CD4-positive, alpha-beta memory T cell (primary cell): ENCODE measurements at regions of chr2 and their contacts with region 1.

Region 1: DNA sequence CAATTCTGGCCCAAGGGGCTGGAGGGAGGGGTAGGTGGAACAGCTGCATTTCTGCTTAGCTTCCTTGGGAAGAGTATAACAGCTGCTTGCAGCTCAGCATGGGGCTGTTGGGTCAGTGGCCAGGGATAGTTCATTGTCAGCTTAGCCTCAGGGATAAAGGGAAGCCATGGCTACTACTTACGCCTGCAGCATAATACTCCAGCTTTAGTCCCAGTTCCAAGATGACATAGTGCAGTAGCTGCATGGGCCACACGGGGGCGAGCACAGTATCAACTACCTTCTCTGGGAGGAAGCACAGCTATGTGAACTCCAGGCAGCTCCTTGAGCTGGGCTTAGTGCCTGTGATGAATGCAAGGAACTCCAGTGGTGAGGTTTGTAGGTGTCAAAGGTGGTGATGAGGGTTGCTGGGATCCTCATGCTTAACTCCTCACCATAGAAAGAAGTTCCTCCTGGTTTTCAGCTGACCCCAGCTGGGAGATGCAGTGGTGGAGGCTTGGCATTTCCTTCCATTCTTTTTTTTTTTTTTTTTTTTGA is 35.4 kb upstream of the RHOB start:
- DNase-seq: peak; percentile 55 to 63 (median 59)
- H3K4me3 ChIP-seq: no peak overlapping the region
- H3K4me3 Mint-ChIP-seq: no peak overlapping the region
- H3K27ac ChIP-seq: no peak overlapping the region
- H3K27ac Mint-ChIP-seq: peak overlapping the region in 2 of 7 donors; percentile 13 to 71
- H3K4me1 ChIP-seq: no peaks in the 10 kb centered on the region
- H3K4me1 Mint-ChIP-seq: peaks cover 0 to 2% (median under 1%) of the 10 kb centered on the region in 4 donors
- H3K27me3 ChIP-seq: no peaks in the 10 kb centered on the region
- H3K27me3 Mint-ChIP-seq: peaks cover 3 to 12% of the 10 kb centered on the region in 2 donors

Region 2: GRCh38 chr2:19554520-19554919 is 856.9 kb before region 1 on chr2:
- CTCF ChIA-PET with region 1: no interaction called
- POLR2A ChIA-PET with region 1: no interaction called
- intact Hi-C with region 1: no loop called
- DNase-seq: no peak
- H3K4me3 ChIP-seq: no peak overlapping the region
- H3K4me3 Mint-ChIP-seq: no peak overlapping the region
- H3K27ac ChIP-seq: no peak overlapping the region
- H3K27ac Mint-ChIP-seq: no peak overlapping the region
- H3K4me1 ChIP-seq: no peaks in the 10 kb centered on the region
- H3K4me1 Mint-ChIP-seq: peaks cover 0 to 7% (median 2%) of the 10 kb centered on the region in 4 donors
- H3K27me3 ChIP-seq: no peaks in the 10 kb centered on the region
- H3K27me3 Mint-ChIP-seq: peaks cover 4 to 13% of the 10 kb centered on the region in 2 donors

Region 3: GRCh38 chr2:20317197-20317596 is 94.2 kb before region 1 on chr2:
- CTCF ChIA-PET with region 1: no interaction called
- POLR2A ChIA-PET with region 1: no interaction called
- intact Hi-C with region 1: no loop called
- DNase-seq: no peak
- H3K4me3 ChIP-seq: no peak overlapping the region
- H3K4me3 Mint-ChIP-seq: peak overlapping the region in 5 of 8 donors; percentile 34 to 55 (median 48)
- H3K27ac ChIP-seq: no peak overlapping the region
- H3K27ac Mint-ChIP-seq: peak overlapping the region in 6 of 7 donors; percentile 0 to 82 (median 77)
- H3K4me1 ChIP-seq: peaks cover 35% of the 10 kb centered on the region
- H3K4me1 Mint-ChIP-seq: peaks cover 28 to 71% (median 54%) of the 10 kb centered on the region in 4 donors
- H3K27me3 ChIP-seq: no peaks in the 10 kb centered on the region
- H3K27me3 Mint-ChIP-seq: no peaks in the 10 kb centered on the region

Region 4: GRCh38 chr2:20398956-20399567 is 12.4 kb before region 1 on chr2:
- CTCF ChIA-PET with region 1: interaction called, 10 read pairs
- POLR2A ChIA-PET with region 1: no interaction called
- intact Hi-C with region 1: no loop called
- DNase-seq: no peak
- H3K4me3 ChIP-seq: no peak overlapping the region
- H3K4me3 Mint-ChIP-seq: no peak overlapping the region
- H3K27ac ChIP-seq: no peak overlapping the region
- H3K27ac Mint-ChIP-seq: no peak overlapping the region
- H3K4me1 ChIP-seq: no peaks in the 10 kb centered on the region
- H3K4me1 Mint-ChIP-seq: no peaks in the 10 kb centered on the region
- H3K27me3 ChIP-seq: no peaks in the 10 kb centered on the region
- H3K27me3 Mint-ChIP-seq: peaks cover 6 to 15% of the 10 kb centered on the region in 2 donors

Region 5: DNA sequence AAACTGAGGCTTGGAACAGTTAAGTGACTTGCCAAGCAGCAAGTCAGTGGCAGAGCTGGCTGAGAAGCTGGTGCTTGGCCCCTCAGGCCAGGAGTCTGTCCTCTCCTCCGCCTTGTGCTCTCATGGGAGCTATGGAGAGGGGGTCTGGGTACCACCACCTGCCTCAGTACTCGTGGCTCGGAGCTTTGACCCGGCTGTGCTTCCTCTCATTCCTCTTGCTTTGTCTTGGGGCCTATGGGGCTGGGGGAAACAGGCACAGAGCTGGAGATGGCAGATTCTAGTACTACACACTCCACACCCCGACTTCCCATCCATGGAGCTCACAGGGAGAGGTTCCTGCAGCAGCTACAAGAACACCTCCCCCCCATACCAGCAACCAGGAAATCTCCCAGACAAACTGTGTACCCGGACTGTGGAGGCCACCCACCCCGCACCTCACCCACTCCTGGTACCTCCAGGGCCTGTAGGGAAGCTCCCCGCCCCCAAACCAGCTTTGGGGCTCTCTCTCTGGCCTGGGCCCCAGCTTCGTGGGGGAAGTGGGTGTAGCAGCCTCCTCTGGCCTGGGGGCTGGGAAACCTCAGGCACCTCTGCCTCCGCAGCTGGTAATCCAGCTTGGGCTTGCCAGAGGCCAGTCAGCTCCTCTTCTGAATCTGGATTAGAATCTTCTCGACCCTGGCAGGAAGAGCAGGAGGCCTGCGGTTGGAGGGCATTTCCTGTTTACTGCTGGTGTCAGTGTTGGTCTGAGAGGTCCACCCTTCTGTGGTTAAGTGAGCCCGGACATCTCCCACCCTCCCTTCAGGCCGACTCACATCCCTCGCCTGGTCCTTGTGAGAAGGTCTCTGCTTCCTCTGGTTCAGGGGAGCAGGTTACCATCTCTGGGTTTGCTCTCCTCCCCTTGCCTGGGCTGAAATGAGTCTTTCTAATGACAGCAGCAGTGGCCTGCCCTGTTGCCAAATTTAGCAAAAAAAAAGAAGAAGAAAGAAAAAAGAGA is 13.2 kb after region 1 on chr2:
- CTCF ChIA-PET with region 1: interaction called, 93 read pairs
- POLR2A ChIA-PET with region 1: interaction called, 3 read pairs
- intact Hi-C with region 1: no loop called
- DNase-seq: peak in 1 of 5 donors; percentile 9
- H3K4me3 ChIP-seq: no peak overlapping the region
- H3K4me3 Mint-ChIP-seq: peak overlapping the region in 7 of 8 donors; percentile 44 to 70 (median 63)
- H3K27ac ChIP-seq: no peak overlapping the region
- H3K27ac Mint-ChIP-seq: peak overlapping the region in 6 of 7 donors; percentile 82 to 94 (median 86)
- H3K4me1 ChIP-seq: peaks cover 15% of the 10 kb centered on the region
- H3K4me1 Mint-ChIP-seq: peaks cover 11 to 22% (median 17%) of the 10 kb centered on the region in 4 donors
- H3K27me3 ChIP-seq: no peaks in the 10 kb centered on the region
- H3K27me3 Mint-ChIP-seq: peaks cover 4% of the 10 kb centered on the region in 2 donors

Region 6: GRCh38 chr2:20438334-20439192 is 27.1 kb after region 1 on chr2:
- CTCF ChIA-PET with region 1: interaction called, 11 read pairs
- POLR2A ChIA-PET with region 1: no interaction called
- intact Hi-C with region 1: no loop called
- DNase-seq: no peak
- H3K4me3 ChIP-seq: no peak overlapping the region
- H3K4me3 Mint-ChIP-seq: no peak overlapping the region
- H3K27ac ChIP-seq: no peak overlapping the region
- H3K27ac Mint-ChIP-seq: no peak overlapping the region
- H3K4me1 ChIP-seq: no peaks in the 10 kb centered on the region
- H3K4me1 Mint-ChIP-seq: no peaks in the 10 kb centered on the region
- H3K27me3 ChIP-seq: no peaks in the 10 kb centered on the region
- H3K27me3 Mint-ChIP-seq: peaks cover 9 to 11% of the 10 kb centered on the region in 2 donors

Region 7: DNA sequence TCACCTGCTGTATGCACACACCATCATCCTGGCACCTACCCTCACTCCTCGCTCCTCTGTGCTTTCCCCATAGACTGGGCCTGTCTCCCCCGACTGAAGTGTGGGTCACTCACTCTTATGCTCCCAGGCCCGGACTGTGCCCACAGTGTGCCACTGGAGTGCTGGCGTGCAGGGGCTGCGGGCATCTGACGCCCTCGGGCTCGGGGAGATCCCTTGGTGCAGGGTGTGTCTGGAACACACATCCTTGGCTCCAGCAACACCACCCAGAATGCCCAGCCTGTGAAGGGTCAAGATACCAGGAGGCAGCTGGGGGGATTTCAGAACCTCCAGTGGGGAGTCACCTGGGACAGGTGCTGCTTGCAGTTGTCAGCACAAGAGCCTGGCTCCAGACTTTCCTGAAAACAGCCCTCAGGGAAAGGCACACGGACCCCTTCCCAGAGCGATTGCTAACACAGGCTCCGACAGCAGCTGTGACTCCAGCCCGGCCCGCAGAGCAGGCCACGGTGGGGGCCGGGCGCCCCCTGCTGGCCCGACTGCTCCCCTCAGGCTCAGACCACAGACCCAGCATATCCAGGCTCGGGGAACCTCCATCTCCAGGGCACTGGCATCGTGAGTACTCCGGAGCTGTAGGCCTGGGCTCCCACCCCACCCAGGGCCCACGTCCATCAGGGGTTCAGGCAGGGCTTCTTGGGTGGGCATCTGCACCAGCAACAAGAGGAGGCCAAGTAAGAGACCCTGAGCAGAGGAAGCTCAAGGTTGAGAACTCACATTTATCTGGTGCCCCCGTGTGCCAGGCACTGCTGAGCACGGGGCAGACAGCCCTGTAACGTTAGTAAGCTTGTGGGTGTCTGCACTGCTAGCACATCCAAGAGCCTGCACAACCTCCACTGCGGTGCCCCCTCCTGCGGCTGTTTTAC is 230.9 kb after region 1 on chr2:
- CTCF ChIA-PET with region 1: interaction called, 94 read pairs
- POLR2A ChIA-PET with region 1: interaction called, 3 read pairs
- intact Hi-C with region 1: loop called (anchors 1 kb)
- DNase-seq: peak; percentile 64 to 73 (median 70)
- H3K4me3 ChIP-seq: no peak overlapping the region
- H3K4me3 Mint-ChIP-seq: no peak overlapping the region
- H3K27ac ChIP-seq: no peak overlapping the region
- H3K27ac Mint-ChIP-seq: no peak overlapping the region
- H3K4me1 ChIP-seq: no peaks in the 10 kb centered on the region
- H3K4me1 Mint-ChIP-seq: peaks cover 5 to 13% (median 7%) of the 10 kb centered on the region in 4 donors
- H3K27me3 ChIP-seq: no peaks in the 10 kb centered on the region
- H3K27me3 Mint-ChIP-seq: no peaks in the 10 kb centered on the region